GM10248 (cell line): ENCODE measurements at regions of chr1 and their contacts with region 1.

Region 1: DNA sequence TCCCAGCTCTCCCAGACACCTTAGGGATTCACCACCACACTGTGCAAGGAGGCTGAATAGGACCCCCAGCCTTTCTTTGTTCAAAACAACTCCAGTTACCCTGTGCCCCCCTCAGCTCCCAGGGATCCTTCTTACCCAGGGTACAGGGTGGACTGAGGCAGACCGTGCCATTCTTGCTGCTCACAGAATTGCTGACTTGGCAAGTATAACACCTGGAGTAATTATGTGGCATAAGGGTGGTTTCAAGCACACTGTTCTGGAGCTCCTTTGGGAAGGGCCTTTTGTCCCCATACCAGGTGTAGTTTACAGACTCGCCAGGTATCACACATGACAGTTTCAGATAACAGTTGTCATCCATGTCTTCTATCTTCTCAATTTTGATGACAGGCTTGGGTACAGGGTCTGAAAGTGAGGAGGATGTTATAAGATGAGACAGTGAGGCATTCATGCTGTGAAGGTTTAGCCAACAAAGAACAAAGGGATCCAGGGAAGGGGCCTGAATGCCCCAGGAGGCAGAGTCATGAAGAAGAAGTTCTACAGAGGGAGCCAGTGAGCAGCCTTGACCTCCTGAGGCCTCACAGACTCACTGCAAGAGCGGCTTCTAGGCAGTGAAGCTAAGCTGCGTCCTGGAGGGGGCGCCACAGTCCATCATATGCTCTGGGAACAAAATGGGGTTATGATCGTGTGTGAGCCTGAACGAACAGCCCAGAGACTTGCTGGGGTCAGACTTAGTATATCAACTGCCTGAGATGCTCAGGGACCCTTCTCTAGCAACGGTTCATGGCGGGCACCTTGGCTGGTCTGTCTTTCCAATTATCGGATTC is 30.3 kb downstream of the CD48 start:
- DNase-seq: peak; percentile 55
- CTCF ChIP-seq: peak; percentile 93

Region 2: DNA sequence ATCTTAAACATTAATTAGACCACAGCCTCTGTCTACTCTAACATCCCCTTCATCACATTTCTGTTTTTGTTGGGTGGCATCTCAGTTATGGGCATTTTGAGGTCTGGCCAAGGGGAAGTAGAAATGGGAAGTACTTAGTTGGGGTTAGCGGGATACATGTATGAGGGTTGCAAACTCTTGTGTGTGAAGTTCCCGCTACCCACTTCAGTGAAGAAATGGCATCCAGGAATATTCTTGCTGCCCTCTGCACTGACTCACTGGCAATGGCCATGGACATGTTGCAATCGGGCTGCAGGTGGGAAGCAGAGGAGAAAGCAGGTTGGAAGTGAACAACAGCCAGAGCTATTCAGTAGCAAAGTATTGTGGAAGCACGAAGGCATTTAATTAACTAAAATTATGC is 23.0 kb after region 1 on chr1:
- CTCF ChIA-PET with region 1: interaction called, 30 read pairs
- POLR2A ChIA-PET with region 1: no interaction called
- DNase-seq: no peak
- CTCF ChIP-seq: no peak

Region 3: GRCh38 chr1:160711602-160712311 is 30.5 kb after region 1 on chr1 and contains the start of gene CD48:
- CTCF ChIA-PET with region 1: interaction called, 30 read pairs
- POLR2A ChIA-PET with region 1: no interaction called
- DNase-seq: peak; percentile 54
- CTCF ChIP-seq: no peak

Region 4: DNA sequence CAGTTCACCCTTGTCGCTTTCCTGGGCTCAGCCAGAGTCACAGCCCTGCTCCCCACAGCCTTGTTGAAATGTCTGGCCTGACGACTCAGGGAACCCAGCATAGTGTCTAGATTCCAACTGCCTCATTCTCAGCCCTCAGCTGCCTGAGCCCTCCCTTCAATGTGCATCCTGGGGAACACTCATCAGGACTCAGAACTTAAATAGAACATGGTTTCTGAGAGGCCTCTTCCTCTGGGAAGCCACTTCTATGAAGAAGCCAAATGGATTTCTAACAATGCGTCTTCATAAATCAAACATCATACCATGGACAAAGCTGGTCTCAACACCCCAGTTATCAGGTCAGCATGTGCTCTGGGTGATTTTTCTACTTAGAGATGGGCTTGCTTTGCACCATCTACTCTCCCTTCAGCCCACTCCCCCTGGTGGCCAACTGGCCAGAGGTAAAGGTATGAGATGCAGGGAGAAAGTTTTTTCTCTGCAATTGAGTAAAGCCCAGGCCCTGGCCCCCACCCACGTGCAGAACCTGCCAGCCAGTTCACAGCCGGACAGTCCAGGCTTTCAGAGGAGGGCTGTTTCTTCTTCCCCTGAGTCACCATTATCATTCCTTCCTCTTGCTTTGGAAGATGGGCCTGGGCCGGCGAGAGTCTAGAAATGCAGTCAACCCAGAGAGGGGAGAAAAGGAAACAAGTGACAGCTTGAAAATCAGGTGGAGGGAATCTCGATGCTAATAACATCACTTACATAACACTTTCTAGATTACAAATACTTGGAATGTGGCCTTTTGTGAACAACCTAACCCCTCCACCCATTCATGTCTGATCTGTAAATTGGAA is 149.3 kb after region 1 on chr1:
- CTCF ChIA-PET with region 1: interaction called, 24 read pairs
- POLR2A ChIA-PET with region 1: no interaction called
- DNase-seq: peak; percentile 65
- CTCF ChIP-seq: peak; percentile 72

Region 5: DNA sequence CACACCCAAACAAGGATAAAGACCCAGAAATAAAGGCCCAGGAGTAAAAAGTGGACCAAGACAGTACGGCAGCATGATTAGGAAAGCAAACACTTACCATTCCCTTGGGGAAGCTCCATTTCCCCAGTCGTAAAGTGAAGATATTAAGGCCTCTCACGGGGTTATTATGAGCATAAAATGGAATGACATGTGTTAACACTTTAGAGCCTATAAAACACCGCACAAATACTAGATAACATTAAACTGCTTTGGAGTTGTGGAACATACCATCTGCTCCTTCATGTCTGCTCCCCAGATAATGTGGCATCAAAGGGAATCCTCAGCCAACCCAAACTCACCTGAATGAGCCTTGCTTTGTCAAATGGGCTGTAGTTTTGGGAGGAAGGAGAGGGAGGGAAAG is 282.2 kb after region 1 on chr1:
- CTCF ChIA-PET with region 1: no interaction called
- POLR2A ChIA-PET with region 1: no interaction called
- DNase-seq: no peak
- CTCF ChIP-seq: no peak

Region 6: DNA sequence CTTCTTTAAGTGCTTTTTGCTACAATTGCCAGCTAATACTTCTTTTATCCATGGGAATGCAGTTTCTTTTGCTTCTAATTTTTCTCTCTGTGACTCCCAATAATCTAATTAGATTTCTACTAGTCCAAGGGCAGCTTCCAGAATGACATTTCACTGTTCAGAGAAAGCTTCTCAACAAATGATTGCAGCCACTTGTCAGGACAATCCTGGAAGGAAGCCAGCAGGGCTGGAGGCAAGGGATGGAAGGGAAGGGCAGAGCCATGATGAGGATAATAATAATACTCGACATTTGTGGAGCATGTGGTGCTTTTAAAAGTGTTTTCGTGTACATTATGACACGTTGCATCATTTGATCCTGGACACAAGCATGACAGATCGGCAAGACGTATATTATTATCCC is 320.2 kb after region 1 on chr1:
- CTCF ChIA-PET with region 1: no interaction called
- POLR2A ChIA-PET with region 1: no interaction called
- DNase-seq: no peak
- CTCF ChIP-seq: no peak